ENCODE measurements at regions of chr14 and their contacts with region 1.

Region 1: DNA sequence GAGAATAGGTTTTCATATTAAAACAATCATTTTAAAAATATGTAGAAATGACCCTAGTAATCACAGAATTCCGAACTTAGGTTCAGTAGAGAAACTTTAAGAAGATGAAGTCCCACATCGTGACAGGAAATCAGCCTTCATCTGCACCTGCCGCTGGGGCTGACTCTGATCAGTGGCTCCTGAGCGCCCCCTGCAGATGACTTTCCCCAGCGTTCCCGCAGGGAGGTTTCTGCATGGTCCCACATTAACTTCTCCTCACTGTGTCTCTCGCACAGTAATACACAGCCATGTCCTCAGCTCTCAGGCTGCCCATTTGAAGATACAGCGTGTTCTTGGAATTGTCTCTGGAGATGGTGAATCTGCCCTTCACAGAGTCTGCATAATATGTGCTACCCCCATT is 1131.1 kb downstream of the TMEM121 start:
- DNase-seq: peak; percentile 81
- H3K4me3 Mint-ChIP-seq: no peak overlapping the region
- H3K27ac Mint-ChIP-seq: no peak overlapping the region
- H3K4me1 Mint-ChIP-seq: peaks cover 10% of the 10 kb centered on the region
- H3K27me3 Mint-ChIP-seq: peaks cover 2% of the 10 kb centered on the region

Region 2: DNA sequence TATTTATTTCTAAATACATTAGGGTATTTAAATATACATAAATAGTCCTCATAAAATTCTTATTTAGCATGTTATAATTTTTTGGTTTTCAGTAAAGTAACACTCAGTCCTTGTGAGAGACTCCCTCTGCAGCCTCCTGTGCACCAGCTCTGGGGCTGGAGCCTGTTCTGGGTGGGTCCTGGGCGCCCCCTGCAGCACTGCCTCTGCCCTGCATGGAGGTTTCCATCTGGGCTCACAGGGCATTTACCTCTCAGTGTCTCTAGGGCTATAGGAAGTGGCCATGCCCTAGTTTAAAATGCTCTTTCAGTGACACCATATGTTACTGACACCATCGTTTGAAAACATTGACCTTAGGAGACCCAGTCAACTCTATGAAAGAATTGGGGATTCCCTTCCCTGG is 24.1 kb after region 1 on chr14:
- CTCF ChIA-PET with region 1: interaction called, 57 read pairs
- POLR2A ChIA-PET with region 1: no interaction called
- intact Hi-C with region 1: no loop called
- DNase-seq: no peak
- H3K4me3 Mint-ChIP-seq: no peak overlapping the region
- H3K27ac Mint-ChIP-seq: no peak overlapping the region
- H3K4me1 Mint-ChIP-seq: no peaks in the 10 kb centered on the region
- H3K27me3 Mint-ChIP-seq: peaks cover 19% of the 10 kb centered on the region

Measured in activated CD4-positive, alpha-beta memory T cell treated with anti-CD3 and anti-CD28 coated beads for 36 hours (primary cell).